HEK293 (cell line): ENCODE measurements at regions of chr1 and their contacts with region 1.

Region 1: DNA sequence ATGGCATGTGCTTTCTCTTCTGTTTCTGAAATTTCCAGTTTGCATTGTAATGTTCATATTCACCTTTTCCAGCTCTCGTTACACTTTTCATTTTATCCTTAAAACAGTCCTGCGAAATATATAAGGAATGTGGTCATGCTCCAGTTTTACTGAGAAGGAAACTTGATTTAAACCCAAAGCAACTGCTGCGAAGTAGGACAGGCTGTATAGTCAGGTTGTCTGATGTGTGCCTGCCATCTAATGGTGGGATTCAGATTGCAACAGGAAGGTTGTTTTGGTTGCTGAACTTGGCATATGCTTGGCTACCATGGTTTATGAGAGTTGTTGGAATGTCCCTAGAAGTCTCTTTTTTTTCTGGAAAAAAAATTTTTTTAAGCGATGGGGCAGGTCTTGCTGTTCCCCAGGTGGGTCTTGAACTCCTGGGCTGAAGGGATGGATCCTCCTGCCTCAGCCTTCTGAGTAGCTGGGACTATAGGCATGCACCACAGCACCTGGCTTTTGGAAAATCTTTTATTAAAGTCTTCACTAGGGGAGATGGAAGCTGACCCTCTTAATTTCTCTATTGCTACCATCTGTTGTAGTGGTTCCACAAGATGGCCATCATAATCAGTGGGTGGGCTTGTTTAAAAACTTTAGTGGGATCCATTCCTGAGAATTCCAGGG is 86.9 kb downstream of the UCK2 start:
- H3K4me3 ChIP-seq: no peak overlapping the region
- H3K27ac ChIP-seq: no peak overlapping the region
- H3K4me1 ChIP-seq: no peaks in the 10 kb centered on the region
- CTCF ChIP-seq: peak; percentile 80

Region 2: DNA sequence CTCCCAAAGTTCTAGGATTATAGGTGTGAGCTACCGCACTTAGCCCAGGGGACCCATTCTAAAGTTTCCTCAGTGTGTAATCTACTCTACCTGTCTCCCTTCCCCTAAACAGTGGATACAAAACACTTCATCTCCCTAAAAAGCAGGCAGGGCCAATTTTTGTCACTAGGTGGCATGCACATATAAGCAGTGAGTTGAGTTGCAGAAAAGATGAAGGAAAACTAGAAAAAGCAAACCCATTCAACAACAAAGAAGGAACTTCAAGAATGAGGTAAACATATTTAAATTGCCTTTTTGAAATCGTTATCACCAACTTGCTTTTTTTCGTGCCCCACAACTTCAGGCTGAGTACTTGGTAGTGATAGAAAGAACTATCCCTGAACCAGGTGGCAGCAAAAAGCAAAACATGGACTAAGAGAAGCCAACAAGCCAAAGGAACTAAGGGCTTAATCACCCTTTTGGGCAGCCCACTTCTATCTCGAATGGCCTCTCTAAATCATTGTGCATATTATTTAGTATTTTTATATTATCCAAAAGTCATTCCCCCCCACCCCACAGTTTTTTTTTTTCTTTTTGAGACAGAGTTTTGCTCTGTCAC is 196.2 kb before region 1 on chr1:
- CTCF ChIA-PET with region 1: interaction called, 18 read pairs
- POLR2A ChIA-PET with region 1: interaction called, 13 read pairs
- H3K4me3 ChIP-seq: no peak overlapping the region
- H3K27ac ChIP-seq: no peak overlapping the region
- H3K4me1 ChIP-seq: no peaks in the 10 kb centered on the region
- CTCF ChIP-seq: peak; percentile 79

Region 3: DNA sequence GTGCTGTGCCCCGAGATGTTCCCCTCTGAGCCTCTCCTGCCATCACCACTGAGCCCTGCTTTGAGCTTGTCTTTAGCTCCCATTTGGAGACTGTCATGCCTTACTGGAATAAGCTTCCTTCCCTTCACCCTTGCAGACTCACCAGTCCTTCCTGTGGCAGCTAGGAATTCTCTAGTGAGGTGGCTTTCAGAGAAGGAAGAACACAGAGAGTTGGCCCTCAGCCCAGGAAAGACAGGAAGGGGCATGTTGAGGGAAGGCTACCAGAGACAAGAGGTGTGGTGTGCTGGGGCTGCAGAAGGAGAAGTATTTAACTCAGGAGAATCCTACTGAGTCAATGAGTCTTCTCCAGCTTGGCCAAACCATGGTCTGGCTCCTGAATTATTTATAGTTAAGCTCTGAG is 10.6 kb before region 1 on chr1:
- CTCF ChIA-PET with region 1: interaction called, 15 read pairs
- POLR2A ChIA-PET with region 1: no interaction called
- H3K4me3 ChIP-seq: no peak overlapping the region
- H3K27ac ChIP-seq: no peak overlapping the region
- H3K4me1 ChIP-seq: no peaks in the 10 kb centered on the region
- CTCF ChIP-seq: no peak